ENCODE measurements at regions of chr12 and their contacts with region 1.

Region 1: DNA sequence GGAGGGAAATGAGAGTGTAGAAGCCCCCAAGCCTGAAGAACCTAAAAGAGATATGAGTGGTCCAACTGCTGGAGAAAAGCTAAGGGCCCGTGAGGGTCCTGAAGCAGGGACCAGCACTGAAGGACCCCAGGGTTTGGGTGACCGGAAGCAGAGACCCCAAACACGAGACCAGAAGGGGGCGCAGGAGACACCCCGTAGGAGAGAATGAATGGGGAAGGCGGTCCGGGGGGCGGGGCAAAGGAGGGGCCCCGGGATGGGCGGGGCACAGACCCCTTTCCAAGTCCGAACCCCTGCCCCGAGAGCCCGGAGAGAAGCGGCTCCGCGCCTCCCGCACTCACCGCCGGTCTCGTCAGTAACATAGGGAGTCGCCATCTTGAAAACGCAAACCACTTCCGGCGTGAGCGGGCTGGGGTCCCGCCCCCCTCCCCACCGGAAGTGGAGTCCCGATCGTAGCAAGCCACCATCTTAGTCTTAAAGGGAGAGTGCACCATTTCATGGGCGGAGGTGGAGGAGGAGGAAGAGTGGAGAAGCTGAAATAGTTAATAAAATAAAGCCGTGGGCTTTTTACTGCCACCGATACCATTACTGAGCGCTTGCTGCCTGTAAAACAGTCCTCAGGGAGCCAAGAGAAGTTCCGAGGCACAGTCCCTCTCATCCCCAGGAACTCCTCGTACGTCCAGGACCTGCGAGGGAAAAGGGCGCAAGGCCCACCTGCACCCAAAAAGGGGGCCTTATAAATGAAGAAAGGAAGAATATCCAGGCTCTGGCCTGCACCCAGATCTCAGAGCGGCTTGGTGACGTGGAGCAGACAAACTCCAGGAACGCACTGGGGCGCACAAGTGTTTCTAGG is 731 bp downstream of the PYM1 start:
- DNase-seq: peak; percentile 88 to 96 (median 94)
- ATAC-seq: peak; percentile 91
- H3K4me3 ChIP-seq: peak overlapping the region; percentile 84
- H3K27ac ChIP-seq: peak overlapping the region; percentile 97
- H3K4me1 ChIP-seq: peaks cover 8% of the 10 kb centered on the region
- H3K27me3 ChIP-seq: no peaks in the 10 kb centered on the region

Region 2: GRCh38 chr12:55738123-55739024 is 188.6 kb before region 1 on chr12:
- intact Hi-C with region 1: loop called in 1 of 4 experiments (anchors 5 kb)
- DNase-seq: peak; percentile 89 to 94 (median 93)
- ATAC-seq: peak; percentile 83
- H3K4me3 ChIP-seq: peak overlapping the region; percentile 75
- H3K27ac ChIP-seq: peak overlapping the region; percentile 68
- H3K4me1 ChIP-seq: no peaks in the 10 kb centered on the region
- H3K27me3 ChIP-seq: no peaks in the 10 kb centered on the region

Region 3: GRCh38 chr12:55817346-55818139 is 109.4 kb before region 1 on chr12 and contains the starts of genes ORMDL2 and SARNP:
- intact Hi-C with region 1: loop called in 2 of 4 experiments (anchors 5 to 10 kb)
- DNase-seq: peak; percentile 95 to 98 (median 96)
- ATAC-seq: peak; percentile 99
- H3K4me3 ChIP-seq: peak within 1 kb of the TSS; percentile 84
- H3K27ac ChIP-seq: peak within 1 kb of the TSS; percentile 88
- H3K4me1 ChIP-seq: no peaks in the 10 kb centered on the region
- H3K27me3 ChIP-seq: no peaks in the 10 kb centered on the region
- total RNA-seq, gene ORMDL2: 13.8 to 23.2 (median 17.6) TPM
- total RNA-seq, gene SARNP: 50.3 to 55.7 (median 52.7) TPM

Region 4: GRCh38 chr12:55829967-55830600 is 96.9 kb before region 1 on chr12:
- intact Hi-C with region 1: loop called (anchors 5 to 10 kb)
- DNase-seq: peak; percentile 59 to 81 (median 77)
- ATAC-seq: peak; percentile 42 to 48
- H3K4me3 ChIP-seq: peak overlapping the region; percentile 81
- H3K27ac ChIP-seq: peak overlapping the region; percentile 92
- H3K4me1 ChIP-seq: peaks cover 17% of the 10 kb centered on the region
- H3K27me3 ChIP-seq: no peaks in the 10 kb centered on the region

Region 5: DNA sequence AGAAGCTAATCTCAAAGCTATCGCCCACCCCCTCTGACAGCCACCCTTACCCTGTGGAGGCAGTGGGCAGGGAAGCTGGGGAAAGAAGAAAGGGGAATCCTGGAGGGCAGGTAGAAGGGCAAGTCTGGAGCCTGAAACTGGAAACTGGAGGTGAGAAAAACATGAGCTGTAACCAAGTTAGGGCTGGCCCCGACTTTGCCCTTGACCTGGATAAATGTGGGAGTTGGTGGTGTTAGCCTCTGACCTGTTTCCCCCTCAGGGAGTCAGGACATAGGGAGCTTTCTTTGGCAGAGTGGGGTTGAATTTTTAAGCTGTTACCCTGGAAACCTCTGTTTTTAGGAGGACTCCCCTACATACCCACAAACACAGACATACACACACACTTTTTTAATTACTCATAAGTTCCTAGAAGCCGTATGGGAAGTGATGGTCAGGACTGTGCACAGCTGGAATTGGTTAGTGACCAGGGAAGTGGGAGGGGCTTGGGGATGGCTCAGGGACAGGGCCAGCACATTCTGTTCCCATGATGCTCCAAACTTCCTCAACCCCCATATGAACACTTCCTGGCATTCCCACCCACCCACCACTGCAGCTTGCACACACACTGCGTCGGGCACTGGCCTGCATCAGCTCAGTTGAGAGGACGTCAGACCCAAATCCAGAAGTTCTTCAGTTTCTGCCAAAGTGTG is 79.2 kb before region 1 on chr12:
- intact Hi-C with region 1: loop called in 1 of 4 experiments (anchors 10 kb)
- DNase-seq: peak; percentile 94 to 96 (median 96)
- ATAC-seq: peak; percentile 96 to 97
- H3K4me3 ChIP-seq: no peak overlapping the region
- H3K27ac ChIP-seq: peak overlapping the region; percentile 99
- H3K4me1 ChIP-seq: peaks cover 12% of the 10 kb centered on the region
- H3K27me3 ChIP-seq: no peaks in the 10 kb centered on the region